K562 (cell line): ENCODE measurements at regions of chr22 and their contacts with region 1.

Region 1: GRCh38 chr22:39078329-39078728 is 1.3 kb downstream of the APOBEC3G start:
- DNase-seq: no peak
- ATAC-seq: no peak
- H3K4me3 ChIP-seq: no peak overlapping the region
- H3K27ac ChIP-seq: no peak overlapping the region
- H3K4me1 ChIP-seq: peaks cover 0 to 20% of the 10 kb centered on the region in 2 experiments; a peak in 4 of 5 replicates
- H3K27me3 ChIP-seq: no peaks in the 10 kb centered on the region
- CTCF ChIP-seq: no peak
- EP300 ChIP-seq: no peak
- POLR2A ChIP-seq: no peak
- RAD21 ChIP-seq: no peak

Region 2: GRCh38 chr22:39039306-39040126 is 38.8 kb before region 1 on chr22:
- CTCF ChIA-PET with region 1: no interaction called
- POLR2A ChIA-PET with region 1: no interaction called
- in situ Hi-C with region 1: loop called (anchors 5 kb)
- intact Hi-C with region 1: no loop called
- DNase-seq: no peak
- ATAC-seq: 0 out of 3 replicates have a peak, but pooled peaks have one; percentile 16
- H3K4me3 ChIP-seq: no peak overlapping the region
- H3K27ac ChIP-seq: no peak overlapping the region
- H3K4me1 ChIP-seq: peaks cover 0 to 21% of the 10 kb centered on the region in 2 experiments; a peak in 4 of 5 replicates
- H3K27me3 ChIP-seq: no peaks in the 10 kb centered on the region
- CTCF ChIP-seq: no peak
- EP300 ChIP-seq: no peak
- POLR2A ChIP-seq: no peak
- RAD21 ChIP-seq: no peak